Activated CD4-positive, alpha-beta T cell treated with anti-CD3 and anti-CD28 coated beads, Interleukin-2, amount 10 ng/mL, durations not matched to agents 24 days and 14 days (primary cell): ENCODE measurements at regions of chr4 and their contacts with region 1.

Region 1: DNA sequence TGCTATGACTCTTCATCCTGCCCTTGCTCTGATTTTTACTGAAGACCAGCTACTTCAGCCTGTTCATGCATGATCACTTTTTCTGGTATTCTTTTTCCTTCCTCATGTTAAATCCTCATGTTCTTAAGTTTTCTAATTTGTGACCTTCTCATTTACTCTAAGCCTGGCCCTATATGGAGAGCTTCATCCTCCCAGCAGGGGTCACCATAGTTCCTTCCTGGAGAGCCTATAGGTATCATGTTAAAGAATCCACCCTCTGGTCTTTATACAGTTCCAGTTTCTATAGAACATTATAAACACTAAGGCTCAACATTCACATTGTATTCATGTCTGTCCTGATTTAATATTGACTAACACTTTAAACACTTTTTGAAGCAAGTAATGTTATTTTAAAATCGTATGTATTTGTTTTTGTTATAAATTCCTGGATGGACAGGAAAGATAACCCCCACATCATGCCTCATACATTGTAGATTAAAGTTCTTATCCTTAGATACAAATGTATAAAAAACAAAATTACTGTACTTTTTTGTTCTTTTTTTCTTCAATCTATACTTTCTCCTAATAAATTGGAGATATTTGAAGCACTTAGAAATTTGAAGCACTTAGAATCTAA is 53.8 kb upstream of the OTUD4 start:
- DNase-seq: peak; percentile 85
- H3K4me3 Mint-ChIP-seq: no peak overlapping the region
- H3K27ac Mint-ChIP-seq: no peak overlapping the region
- H3K4me1 Mint-ChIP-seq: no peaks in the 10 kb centered on the region
- H3K27me3 Mint-ChIP-seq: peaks cover 14% of the 10 kb centered on the region

Region 2: DNA sequence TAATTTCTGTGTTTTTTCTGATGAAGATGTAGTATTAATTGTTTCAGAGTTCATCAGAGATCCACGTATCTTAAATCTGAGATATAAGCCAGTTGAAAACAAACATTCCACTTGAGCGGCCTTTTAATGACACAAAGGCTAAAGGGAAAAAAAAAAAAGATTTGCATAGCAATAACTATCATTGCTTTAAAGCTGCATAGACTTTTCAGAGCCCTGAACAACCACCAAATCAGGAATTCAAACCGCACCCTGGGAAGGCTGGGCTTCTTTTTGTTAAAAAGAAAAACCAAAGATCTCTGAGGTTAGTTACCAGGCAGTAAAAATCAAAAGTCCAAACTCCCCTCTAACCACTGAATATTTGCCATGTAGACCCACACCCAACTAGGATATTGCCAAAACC is 382.3 kb before region 1 on chr4:
- intact Hi-C with region 1: no loop called
- DNase-seq: no peak
- H3K4me3 Mint-ChIP-seq: no peak overlapping the region
- H3K27ac Mint-ChIP-seq: no peak overlapping the region
- H3K4me1 Mint-ChIP-seq: no peaks in the 10 kb centered on the region
- H3K27me3 Mint-ChIP-seq: no peaks in the 10 kb centered on the region

Region 3: DNA sequence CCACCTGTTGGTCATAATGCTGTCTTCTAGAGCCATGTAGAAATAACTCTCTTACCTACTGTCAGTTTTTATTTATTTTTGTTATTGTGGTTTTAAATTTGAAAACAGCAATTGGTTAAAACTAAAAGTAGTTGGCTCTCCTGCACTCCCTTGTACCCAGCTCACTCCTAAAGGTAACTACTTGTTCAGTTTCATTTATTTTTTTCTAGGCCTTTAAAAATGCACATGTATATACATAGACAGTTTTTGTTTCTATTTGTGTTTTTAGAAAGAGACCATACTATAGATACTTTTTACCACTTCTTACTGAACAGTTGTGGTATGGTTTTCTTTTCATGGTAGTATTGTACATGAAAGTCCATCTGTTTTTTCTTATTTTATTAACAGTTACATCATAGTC is 264.2 kb after region 1 on chr4:
- intact Hi-C with region 1: loop called (anchors 1 kb)
- DNase-seq: no peak
- H3K4me3 Mint-ChIP-seq: no peak overlapping the region
- H3K27ac Mint-ChIP-seq: no peak overlapping the region
- H3K4me1 Mint-ChIP-seq: no peaks in the 10 kb centered on the region
- H3K27me3 Mint-ChIP-seq: peaks cover 19% of the 10 kb centered on the region

Region 4: DNA sequence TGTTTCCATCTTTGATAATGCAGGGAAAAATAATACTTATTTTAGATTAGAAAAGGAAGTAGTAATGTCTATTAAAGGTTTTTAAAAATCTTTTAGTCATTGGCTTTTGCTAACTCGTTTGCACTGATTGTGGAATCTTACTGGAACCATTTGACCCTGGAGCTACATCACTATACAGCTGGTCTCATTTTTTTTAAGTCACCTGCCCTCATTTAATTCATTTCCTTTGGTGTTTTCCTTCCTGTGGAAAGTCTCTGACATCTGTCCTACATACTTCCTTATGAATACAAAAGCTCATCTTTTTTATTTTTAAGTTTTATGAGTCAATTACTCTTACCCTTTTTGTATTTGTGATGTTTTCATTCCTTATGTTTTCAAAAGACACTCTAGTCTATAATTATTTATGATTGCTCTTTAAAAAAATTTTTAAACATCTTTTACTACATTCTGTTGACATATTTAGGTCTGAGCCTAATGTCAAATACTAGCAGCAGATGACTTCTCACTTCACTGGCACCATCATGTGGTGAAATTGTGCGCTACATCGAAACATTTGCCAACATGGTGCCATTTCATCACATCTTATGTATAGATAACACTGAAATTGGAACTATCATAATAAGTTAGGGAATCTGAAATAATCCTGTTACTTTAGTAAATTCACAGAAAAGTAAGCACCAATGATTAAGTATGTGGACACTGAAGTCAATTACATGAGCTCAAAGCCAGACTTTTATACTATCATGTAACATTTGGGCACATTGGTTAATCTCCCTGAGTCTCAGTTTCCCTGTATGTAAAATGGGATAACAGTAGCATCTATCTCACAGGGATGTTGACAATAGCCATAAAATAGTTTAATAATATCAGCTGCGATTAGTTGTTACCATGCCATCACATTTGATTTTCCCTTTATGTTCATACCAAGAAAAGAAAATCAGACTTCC is 375.6 kb after region 1 on chr4:
- intact Hi-C with region 1: loop called (anchors 1 kb)
- DNase-seq: peak; percentile 89
- H3K4me3 Mint-ChIP-seq: no peak overlapping the region
- H3K27ac Mint-ChIP-seq: no peak overlapping the region
- H3K4me1 Mint-ChIP-seq: peaks cover 7% of the 10 kb centered on the region
- H3K27me3 Mint-ChIP-seq: peaks cover 12% of the 10 kb centered on the region